ENCODE measurements at regions of chr2 and their contacts with region 1.

Region 1: GRCh38 chr2:134118279-134119116 is 135.4 kb upstream of the MGAT5 start:
- DNase-seq: peak; percentile 85
- H3K4me3 Mint-ChIP-seq: peak overlapping the region; percentile 70
- H3K27ac Mint-ChIP-seq: peak overlapping the region; percentile 52
- H3K4me1 Mint-ChIP-seq: peaks cover 23% of the 10 kb centered on the region
- H3K27me3 Mint-ChIP-seq: no peaks in the 10 kb centered on the region
- CTCF ChIP-seq: peak; percentile 77

Region 2: GRCh38 chr2:133886735-133887660 is 231.5 kb before region 1 on chr2:
- CTCF ChIA-PET with region 1: interaction called, 18 read pairs
- intact Hi-C with region 1: loop called (anchors 1 kb)
- DNase-seq: peak; percentile 80
- H3K4me3 Mint-ChIP-seq: no peak overlapping the region
- H3K27ac Mint-ChIP-seq: no peak overlapping the region
- H3K4me1 Mint-ChIP-seq: peaks cover 29% of the 10 kb centered on the region
- H3K27me3 Mint-ChIP-seq: peaks cover 12% of the 10 kb centered on the region
- CTCF ChIP-seq: peak; percentile 45

Region 3: GRCh38 chr2:134052173-134052572 is 66.3 kb before region 1 on chr2:
- CTCF ChIA-PET with region 1: no interaction called
- intact Hi-C with region 1: no loop called
- DNase-seq: no peak
- H3K4me3 Mint-ChIP-seq: no peak overlapping the region
- H3K27ac Mint-ChIP-seq: no peak overlapping the region
- H3K4me1 Mint-ChIP-seq: no peaks in the 10 kb centered on the region
- H3K27me3 Mint-ChIP-seq: peaks cover 49% of the 10 kb centered on the region
- CTCF ChIP-seq: no peak

Region 4: DNA sequence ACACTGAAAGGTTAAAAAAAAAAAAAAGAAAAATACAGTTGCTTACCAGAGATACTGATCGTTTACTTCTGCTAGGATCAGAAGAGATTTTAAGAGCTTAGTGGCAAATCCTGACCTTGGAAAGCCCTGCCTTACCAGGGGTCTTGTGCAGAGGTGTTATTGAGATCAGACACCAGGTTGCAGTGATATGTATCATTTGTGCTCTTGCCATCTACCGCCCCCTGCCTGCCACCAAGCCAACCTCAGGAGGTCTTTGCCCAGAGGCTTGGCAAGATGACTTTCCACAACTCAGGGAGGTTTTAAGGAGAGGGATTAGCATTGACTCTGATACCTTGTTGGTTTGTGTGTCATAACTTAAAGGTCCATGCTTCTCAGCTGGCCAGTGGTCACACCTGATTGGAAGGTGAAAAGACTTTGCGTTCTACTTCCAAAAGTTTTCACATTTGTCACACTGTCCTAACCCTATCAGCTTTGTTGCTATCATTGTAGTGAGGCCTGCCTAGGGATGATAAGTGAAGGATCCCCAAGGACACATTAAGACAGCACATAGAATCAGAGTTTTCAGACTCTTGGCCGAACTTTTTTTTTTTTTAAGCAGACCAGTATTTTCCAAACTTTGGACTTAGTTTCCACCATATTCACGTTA is 89.2 kb after region 1 on chr2:
- CTCF ChIA-PET with region 1: interaction called, 30 read pairs
- intact Hi-C with region 1: loop called (anchors 5 kb)
- DNase-seq: peak; percentile 70
- H3K4me3 Mint-ChIP-seq: no peak overlapping the region
- H3K27ac Mint-ChIP-seq: no peak overlapping the region
- H3K4me1 Mint-ChIP-seq: no peaks in the 10 kb centered on the region
- H3K27me3 Mint-ChIP-seq: no peaks in the 10 kb centered on the region
- CTCF ChIP-seq: peak; percentile 63

Region 5: DNA sequence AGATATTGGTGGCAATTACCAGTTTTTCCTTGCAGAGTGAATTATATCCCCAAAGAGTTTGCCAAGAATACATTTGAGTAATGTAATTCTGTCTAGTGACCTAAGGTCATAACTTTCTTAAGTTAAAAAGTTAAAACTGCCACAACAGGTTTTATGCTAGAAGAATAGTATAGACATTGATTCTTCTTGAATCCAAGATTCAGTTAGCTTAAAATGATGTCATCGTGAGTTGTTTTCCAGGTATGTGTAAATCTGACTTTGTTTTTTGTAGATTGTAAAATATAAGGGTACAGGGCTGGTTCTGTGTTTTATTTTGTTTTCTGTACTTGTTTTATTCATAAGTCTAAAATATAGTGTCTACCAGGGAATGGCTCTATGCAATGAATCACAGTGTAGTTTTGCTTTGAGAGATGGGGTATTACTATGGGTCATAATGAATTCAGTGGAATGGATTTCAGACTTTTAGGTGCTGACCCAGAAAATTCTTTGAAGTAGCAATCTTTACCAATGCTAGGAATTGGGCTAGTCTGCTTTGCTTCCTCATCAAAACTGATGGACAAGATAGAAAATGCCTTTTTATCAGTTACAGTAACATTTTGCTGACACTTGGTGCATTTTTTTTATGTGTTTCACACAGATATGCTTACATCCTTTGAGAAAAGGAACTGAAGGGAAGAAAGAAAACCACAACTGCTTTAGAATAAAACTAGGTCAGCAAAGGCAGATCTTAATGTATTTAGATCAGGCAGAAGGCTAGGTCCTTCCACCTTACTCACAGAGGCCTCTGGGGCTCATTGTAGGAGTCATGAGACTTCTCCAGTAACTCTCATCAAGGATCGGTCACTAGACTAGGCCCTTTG is 114.6 kb after region 1 on chr2:
- CTCF ChIA-PET with region 1: interaction called, 5 read pairs
- intact Hi-C with region 1: loop called (anchors 5 kb)
- DNase-seq: no peak
- H3K4me3 Mint-ChIP-seq: peak overlapping the region; percentile 42
- H3K27ac Mint-ChIP-seq: peak overlapping the region; percentile 97
- H3K4me1 Mint-ChIP-seq: peaks cover 71% of the 10 kb centered on the region
- H3K27me3 Mint-ChIP-seq: no peaks in the 10 kb centered on the region
- CTCF ChIP-seq: no peak

Region 6: DNA sequence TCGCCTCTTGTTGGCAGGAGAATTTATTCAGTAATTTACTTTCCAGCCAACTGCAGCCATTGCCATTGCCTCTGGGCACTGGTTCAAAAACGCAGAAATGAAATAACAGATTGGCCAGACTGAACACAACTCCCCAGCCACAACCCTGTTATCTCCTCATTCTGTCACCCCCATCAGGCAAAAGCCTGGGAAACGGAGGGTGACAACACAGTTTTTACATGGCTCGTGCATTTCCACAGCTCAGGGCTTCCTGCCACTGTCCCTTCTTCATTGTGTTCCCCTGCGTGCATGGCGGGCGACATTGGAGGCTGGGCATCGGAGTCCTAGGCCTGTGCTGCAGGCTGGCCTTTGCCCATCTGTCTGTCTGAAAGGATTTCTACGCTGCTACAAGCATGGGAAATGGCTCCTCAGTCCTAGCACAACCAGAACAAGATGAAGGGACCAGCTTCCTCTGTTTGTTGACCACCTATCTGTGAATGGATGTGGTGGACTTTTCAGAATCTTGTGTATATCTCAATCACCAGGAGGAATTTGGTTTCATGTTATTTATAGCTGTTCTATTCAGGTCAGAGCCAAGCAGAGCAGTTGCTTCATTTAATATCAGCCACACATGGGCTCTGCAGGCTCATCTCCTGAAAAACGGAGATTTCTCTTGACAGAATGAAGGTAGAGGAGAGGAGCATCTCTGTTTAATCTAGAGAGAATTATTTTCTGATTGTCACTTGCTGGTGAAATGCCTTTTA is 242.4 kb after region 1 on chr2:
- CTCF ChIA-PET with region 1: no interaction called
- intact Hi-C with region 1: loop called (anchors 5 kb)
- DNase-seq: no peak
- H3K4me3 Mint-ChIP-seq: no peak overlapping the region
- H3K27ac Mint-ChIP-seq: no peak overlapping the region
- H3K4me1 Mint-ChIP-seq: peaks cover 6% of the 10 kb centered on the region
- H3K27me3 Mint-ChIP-seq: no peaks in the 10 kb centered on the region
- CTCF ChIP-seq: no peak

Region 7: DNA sequence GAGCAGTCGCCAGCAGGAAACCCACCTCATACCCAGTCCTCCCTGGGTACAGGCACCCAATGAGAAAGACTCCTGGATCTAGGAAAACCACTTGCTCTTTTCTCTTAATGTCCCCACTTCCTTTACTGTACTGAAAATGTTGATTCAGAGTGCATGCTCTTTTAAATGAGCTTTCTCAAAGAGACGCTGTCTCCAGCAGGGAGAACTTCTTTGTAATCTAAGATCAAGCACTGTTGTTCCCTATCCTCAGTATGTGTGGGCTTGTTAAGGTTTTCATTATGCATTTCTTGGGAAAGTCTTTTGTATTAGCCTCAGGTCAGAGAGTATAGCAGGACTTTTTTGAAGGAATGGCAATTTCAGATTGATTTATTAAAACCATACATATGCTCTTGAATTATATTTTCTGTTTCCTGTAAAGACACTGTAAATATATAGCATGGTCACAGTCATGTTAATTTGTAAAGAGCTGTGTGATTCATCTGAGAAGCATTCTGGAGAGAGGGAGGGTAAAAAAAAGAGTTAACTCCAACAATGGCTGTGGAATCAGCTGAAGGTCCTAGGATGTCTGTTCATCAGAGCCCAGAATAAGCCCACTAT is 313.4 kb after region 1 on chr2:
- CTCF ChIA-PET with region 1: interaction called, 5 read pairs
- intact Hi-C with region 1: loop called (anchors 5 kb)
- DNase-seq: no peak
- H3K4me3 Mint-ChIP-seq: peak overlapping the region; percentile 46
- H3K27ac Mint-ChIP-seq: peak overlapping the region; percentile 82
- H3K4me1 Mint-ChIP-seq: peaks cover 51% of the 10 kb centered on the region
- H3K27me3 Mint-ChIP-seq: no peaks in the 10 kb centered on the region
- CTCF ChIP-seq: no peak